HepG2 (cell line): ENCODE measurements at regions of chr14 and their contacts with region 1.

Region 1: GRCh38 chr14:23320774-23321571 is at the start of gene PABPN1:
- DNase-seq: peak; percentile 100
- ATAC-seq: peak; percentile 94
- H3K4me3 ChIP-seq: peak within 1 kb of the TSS; percentile 79 to 99 (median 98)
- H3K27ac ChIP-seq: peak within 1 kb of the TSS; percentile 95
- H3K4me1 ChIP-seq: peaks cover 36% of the 10 kb centered on the region
- H3K27me3 ChIP-seq: peaks cover 0 to 6% of the 10 kb centered on the region in 2 experiments; a peak in 2 of 5 replicates
- CTCF ChIP-seq: peak; percentile 10
- EP300 ChIP-seq: peak; percentile 68 to 90; a peak in 3 of 4 replicates
- POLR2A ChIP-seq: peak in 1 of 2 experiments; percentile 91; a peak in 2 of 4 replicates
- RAD21 ChIP-seq: peak; percentile 67
- total RNA-seq, gene PABPN1: 173 and 233 TPM in 2 replicates

Region 2: GRCh38 chr14:22973217-22974032 is 347.5 kb before region 1 on chr14:
- CTCF ChIA-PET with region 1: no interaction called
- POLR2A ChIA-PET with region 1: interaction called, 23 read pairs
- in situ Hi-C with region 1: no loop called
- intact Hi-C with region 1: no loop called
- DNase-seq: peak; percentile 82
- ATAC-seq: no peak
- H3K4me3 ChIP-seq: no peak overlapping the region
- H3K27ac ChIP-seq: peak overlapping the region; percentile 97
- H3K4me1 ChIP-seq: peaks cover 65% of the 10 kb centered on the region
- H3K27me3 ChIP-seq: no peaks in the 10 kb centered on the region
- CTCF ChIP-seq: no peak
- EP300 ChIP-seq: no peak
- POLR2A ChIP-seq: peak in 1 of 2 experiments; percentile 73; a peak in 2 of 4 replicates
- RAD21 ChIP-seq: peak; percentile 97

Region 3: GRCh38 chr14:23286020-23286905 is 34.7 kb before region 1 on chr14 and contains the start of gene HOMEZ:
- CTCF ChIA-PET with region 1: no interaction called
- POLR2A ChIA-PET with region 1: interaction called, 165 read pairs
- in situ Hi-C with region 1: no loop called
- intact Hi-C with region 1: loop called (anchors 1 kb)
- DNase-seq: peak; percentile 100
- ATAC-seq: peak; percentile 99
- H3K4me3 ChIP-seq: peak within 1 kb of the TSS; percentile 83 to 96 (median 83)
- H3K27ac ChIP-seq: peak within 1 kb of the TSS; percentile 83
- H3K4me1 ChIP-seq: peaks cover 26% of the 10 kb centered on the region
- H3K27me3 ChIP-seq: no peaks in the 10 kb centered on the region; a peak in 1 of 5 replicates
- CTCF ChIP-seq: peak; percentile 58
- EP300 ChIP-seq: peak in 1 of 2 experiments; percentile 48; a peak in 2 of 4 replicates
- POLR2A ChIP-seq: peak in 1 of 2 experiments; percentile 93; a peak in 2 of 4 replicates
- RAD21 ChIP-seq: no peak; the same call in 1 of the 2 replicates
- total RNA-seq, gene HOMEZ: 13.6 and 14.5 TPM in 2 replicates

Region 4: DNA sequence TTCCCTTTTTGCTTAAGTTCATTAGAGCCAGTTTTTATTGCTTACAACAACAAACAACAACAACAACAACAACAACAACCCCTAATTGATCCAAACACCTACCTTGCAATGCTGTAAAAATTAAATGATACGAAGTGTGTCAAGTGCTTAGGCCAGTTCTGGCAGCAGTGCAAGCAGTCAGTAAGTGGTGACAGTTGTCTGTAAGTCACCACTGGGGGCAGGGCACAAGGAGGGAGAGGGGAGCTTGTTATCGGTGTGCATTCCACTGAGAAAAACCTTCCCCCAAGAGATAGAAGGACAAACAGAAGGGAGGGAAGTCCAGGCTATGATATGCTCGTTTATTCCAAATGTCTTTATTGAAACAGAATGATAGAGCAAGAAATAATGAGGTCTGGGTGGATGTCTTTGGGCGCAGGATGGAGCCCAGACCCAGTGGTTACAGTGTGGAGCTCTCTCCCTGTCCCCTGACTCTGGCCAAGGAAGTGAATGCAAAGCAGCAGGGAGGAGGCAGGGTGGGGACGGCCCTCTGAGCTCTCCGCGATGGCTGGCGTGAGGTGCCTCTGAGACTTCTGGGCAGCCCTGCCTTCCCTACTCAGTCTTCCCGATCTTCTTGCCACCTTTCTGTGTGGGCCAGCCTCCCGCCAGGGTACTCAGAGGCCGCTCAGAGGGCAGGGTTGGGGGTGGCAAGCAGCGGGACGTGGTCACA is 25.2 kb after region 1 on chr14:
- CTCF ChIA-PET with region 1: no interaction called
- POLR2A ChIA-PET with region 1: interaction called, 16 read pairs
- in situ Hi-C with region 1: no loop called
- intact Hi-C with region 1: no loop called
- DNase-seq: peak; percentile 45
- ATAC-seq: peak; percentile 87
- H3K4me3 ChIP-seq: no peak overlapping the region
- H3K27ac ChIP-seq: no peak overlapping the region
- H3K4me1 ChIP-seq: no peaks in the 10 kb centered on the region
- H3K27me3 ChIP-seq: peaks cover 4 to 66% of the 10 kb centered on the region in 2 experiments
- CTCF ChIP-seq: no peak
- EP300 ChIP-seq: no peak
- POLR2A ChIP-seq: no peak
- RAD21 ChIP-seq: no peak

Region 5: DNA sequence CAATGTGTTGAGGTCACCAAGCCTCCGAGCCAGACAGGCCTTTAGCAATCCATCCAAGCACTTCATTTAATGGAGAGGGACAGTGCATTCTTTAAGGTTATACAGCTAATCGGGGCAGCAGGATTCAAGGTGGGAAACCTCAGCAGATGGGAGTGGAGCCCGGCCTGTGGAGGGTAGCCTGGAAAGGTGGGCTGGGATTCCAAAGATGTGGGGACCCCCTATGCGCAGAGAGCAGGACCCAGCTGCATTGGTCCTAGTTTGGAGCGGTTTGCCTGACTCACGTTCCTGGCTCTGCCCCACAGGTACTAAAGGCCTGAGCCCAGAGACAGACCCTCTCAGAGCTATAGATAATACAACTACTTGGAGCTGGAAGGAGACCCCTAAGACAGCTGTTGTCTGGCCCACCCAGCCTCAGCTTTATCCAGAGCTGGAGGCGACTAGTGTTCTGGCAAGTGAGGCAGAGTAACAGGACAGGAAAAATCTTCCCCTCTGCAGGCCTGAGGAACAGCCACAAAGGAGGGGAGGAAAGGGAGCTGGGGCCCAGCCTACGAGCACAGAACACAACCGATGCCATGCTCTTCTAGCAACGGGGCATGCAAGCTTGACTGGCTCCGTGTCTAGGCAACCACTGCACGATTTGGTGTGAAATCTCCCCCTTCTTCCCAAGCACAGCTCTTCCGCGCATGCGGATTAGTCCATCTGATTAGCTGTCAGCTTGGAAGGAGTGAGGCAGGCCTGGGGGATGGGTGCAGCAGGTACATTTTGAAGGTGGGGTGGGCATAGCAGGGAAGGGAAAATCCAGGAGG is 115.6 kb after region 1 on chr14:
- CTCF ChIA-PET with region 1: no interaction called
- POLR2A ChIA-PET with region 1: interaction called, 26 read pairs
- in situ Hi-C with region 1: no loop called
- intact Hi-C with region 1: no loop called
- DNase-seq: no peak
- ATAC-seq: peak; percentile 0; the same call in 2 of the 3 replicates
- H3K4me3 ChIP-seq: peak overlapping the region in 1 of 3 experiments; percentile 60; a peak in 2 of 6 replicates
- H3K27ac ChIP-seq: peak overlapping the region; percentile 22
- H3K4me1 ChIP-seq: peaks cover 43% of the 10 kb centered on the region
- H3K27me3 ChIP-seq: peaks cover 20 to 70% of the 10 kb centered on the region in 2 experiments
- CTCF ChIP-seq: no peak
- EP300 ChIP-seq: no peak
- POLR2A ChIP-seq: no peak
- RAD21 ChIP-seq: no peak

Region 6: GRCh38 chr14:23577004-23577681 is 256.2 kb after region 1 on chr14:
- CTCF ChIA-PET with region 1: no interaction called
- POLR2A ChIA-PET with region 1: interaction called, 11 read pairs
- in situ Hi-C with region 1: no loop called
- intact Hi-C with region 1: no loop called
- DNase-seq: no peak
- ATAC-seq: no peak
- H3K4me3 ChIP-seq: no peak overlapping the region; a peak in 1 of 6 replicates
- H3K27ac ChIP-seq: no peak overlapping the region
- H3K4me1 ChIP-seq: peaks cover 45% of the 10 kb centered on the region
- H3K27me3 ChIP-seq: peaks cover 0 to 2% of the 10 kb centered on the region in 2 experiments; a peak in 2 of 5 replicates
- CTCF ChIP-seq: no peak
- EP300 ChIP-seq: no peak
- POLR2A ChIP-seq: no peak
- RAD21 ChIP-seq: no peak

Region 7: DNA sequence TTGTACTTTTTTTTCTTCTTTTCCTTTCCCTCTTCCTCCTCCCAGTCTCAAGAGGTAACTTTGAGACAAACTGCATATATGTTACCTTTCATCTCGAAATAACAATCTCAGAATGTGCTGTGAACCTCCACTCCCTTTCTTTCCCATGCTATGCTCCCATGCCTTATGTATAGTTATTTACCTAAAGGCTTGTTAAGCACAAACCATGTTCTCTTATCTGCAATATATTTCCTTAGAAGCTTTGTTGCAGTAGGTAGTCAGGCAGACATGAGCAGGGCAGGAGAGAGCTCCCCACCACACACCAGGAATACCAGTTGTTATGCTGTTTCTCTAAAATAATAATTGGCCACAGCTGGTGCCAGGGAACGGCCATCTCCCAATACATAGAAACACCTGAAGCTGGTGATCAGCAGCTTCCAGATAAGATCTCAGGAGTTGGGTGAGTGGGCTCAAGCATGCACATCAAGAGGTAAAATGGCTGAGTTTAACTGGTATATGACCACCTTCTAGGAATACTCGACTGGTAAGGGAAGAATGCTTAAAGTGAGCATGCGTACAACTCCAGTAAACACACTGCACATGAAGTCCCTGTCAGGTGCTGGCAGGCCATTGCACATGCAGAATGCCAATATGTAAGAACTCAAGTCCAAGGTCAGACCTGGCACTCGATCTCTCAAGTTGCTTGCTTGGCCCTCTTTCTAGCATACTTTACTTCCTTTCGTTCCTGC is 300.4 kb after region 1 on chr14:
- CTCF ChIA-PET with region 1: no interaction called
- POLR2A ChIA-PET with region 1: no interaction called
- in situ Hi-C with region 1: no loop called
- intact Hi-C with region 1: no loop called
- DNase-seq: no peak
- ATAC-seq: peak; percentile 41
- H3K4me3 ChIP-seq: no peak overlapping the region
- H3K27ac ChIP-seq: no peak overlapping the region
- H3K4me1 ChIP-seq: peaks cover 44% of the 10 kb centered on the region
- H3K27me3 ChIP-seq: no peaks in the 10 kb centered on the region
- CTCF ChIP-seq: no peak
- EP300 ChIP-seq: no peak
- POLR2A ChIP-seq: no peak
- RAD21 ChIP-seq: no peak